AG04450 (cell line): ENCODE measurements at regions of chr17 and their contacts with region 1.

Region 1: DNA sequence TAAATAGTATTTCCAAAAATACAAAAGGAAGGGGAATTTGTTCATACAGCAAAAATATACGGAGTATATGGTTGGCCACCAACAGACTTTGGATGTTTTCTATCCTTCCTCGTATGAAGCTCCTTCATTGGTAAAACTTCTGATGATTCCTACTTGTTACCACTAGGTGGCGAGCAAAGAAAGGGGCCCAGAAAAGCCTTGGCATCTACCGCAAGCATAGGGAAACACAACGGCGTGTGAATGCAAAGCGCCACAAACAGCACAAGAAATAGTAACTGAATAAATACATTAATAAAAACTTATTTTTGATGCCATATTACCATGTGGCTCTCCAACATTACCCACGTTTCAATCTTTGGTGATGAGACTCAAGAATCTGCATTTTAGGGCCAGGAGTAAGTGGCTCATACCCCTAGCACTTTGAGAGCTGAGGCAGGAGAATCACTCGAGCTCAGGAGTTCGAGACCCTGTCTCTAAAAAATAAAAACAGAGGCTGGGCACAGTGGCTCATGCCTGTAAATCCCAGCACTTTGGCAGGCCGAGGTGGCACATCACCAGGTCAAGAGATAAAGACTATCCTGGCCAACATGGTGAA is 34.5 kb downstream of the YWHAE start:
- DNase-seq: peak; percentile 72
- H3K4me3 ChIP-seq: no peak overlapping the region
- H3K27ac ChIP-seq: peak overlapping the region; percentile 47
- H3K27me3 ChIP-seq: no peaks in the 10 kb centered on the region
- CTCF ChIP-seq: peak; percentile 94

Region 2: DNA sequence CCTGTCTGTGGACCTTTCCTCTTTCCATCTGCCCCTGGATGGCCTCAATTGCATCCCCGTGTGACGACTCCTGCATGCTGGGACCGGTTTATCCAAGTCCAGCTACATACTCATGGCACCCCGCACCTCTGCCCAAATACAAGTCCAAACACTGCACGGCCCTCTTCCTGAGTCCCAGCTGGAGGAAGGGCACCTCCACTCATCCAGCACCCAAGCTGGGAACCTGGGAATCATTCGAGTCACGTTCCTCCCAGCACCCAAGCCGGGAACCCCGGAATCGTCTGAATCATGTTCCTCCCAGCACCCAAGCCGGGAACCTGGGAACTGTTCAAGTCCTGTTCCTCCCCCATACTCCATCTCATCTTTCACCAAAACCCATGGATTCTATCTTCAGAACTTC is 75.8 kb before region 1 on chr17:
- CTCF ChIA-PET with region 1: no interaction called
- POLR2A ChIA-PET with region 1: no interaction called
- DNase-seq: no peak
- H3K4me3 ChIP-seq: no peak overlapping the region
- H3K27ac ChIP-seq: no peak overlapping the region
- H3K27me3 ChIP-seq: peaks cover under 1% of the 10 kb centered on the region
- CTCF ChIP-seq: no peak

Region 3: DNA sequence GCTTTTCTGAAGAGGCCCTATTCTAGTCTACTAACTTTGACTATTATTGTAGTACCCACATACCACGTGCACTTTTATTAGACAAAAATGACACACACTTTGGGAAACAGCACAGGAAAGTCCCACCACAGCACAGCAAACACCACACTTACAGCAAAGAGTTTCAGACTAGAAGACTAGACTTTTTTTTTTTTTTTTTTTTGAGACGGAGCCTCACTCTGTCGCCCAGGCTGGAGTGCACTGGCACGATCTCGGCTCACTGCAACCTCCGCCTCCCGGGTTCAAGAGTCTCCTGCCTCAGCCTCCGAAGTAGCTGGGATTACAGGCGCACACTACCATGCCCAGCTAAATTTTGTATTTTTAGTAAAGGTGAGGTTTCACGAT is 14.4 kb after region 1 on chr17:
- CTCF ChIA-PET with region 1: interaction called, 78 read pairs
- POLR2A ChIA-PET with region 1: interaction called, 7 read pairs
- DNase-seq: no peak
- H3K4me3 ChIP-seq: no peak overlapping the region
- H3K27ac ChIP-seq: no peak overlapping the region
- H3K27me3 ChIP-seq: no peaks in the 10 kb centered on the region
- CTCF ChIP-seq: no peak

Region 4: DNA sequence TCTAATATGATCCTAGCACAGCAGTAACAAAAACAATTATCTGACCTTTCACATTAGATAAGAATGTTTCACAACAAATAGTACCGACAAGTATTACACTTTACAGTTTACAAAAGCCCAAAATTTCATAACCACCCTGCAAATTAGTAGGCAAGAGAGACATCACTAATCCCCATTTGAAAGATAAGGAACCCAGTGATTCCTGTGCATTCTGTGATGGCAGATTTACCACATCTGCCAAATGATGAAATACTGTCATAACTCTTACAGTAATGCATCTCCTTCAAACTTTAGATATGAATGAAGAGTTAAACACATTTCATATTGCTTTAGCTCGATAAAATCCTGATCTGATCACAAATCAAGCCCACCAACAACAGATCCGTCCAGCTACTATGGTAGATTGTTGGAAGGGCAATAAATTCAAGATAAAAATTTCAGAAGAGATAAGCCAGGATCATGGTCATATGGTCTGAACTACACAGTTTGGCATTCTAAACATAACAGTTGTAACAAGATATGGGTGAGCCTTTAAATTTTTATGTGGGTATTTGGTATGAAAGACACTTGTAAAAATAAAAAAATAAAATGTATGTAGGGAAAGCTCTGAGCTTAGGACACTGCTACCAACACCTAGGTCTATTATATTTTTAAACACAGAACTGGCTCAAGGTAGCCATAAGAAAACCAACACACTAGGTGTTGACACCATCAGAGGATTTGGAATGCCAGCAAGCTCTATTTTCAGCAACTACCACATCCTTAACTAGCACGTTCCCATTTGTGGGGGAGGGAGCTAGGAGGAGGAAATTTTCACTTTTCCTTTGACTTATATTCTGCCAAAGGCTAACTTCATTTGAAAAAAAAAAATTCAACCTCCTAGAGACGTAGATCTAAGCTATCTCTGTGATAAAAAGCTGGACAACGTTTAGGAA is 25.2 kb after region 1 on chr17:
- CTCF ChIA-PET with region 1: interaction called, 68 read pairs
- POLR2A ChIA-PET with region 1: interaction called, 4 read pairs
- DNase-seq: no peak
- H3K4me3 ChIP-seq: no peak overlapping the region
- H3K27ac ChIP-seq: no peak overlapping the region
- H3K27me3 ChIP-seq: no peaks in the 10 kb centered on the region
- CTCF ChIP-seq: no peak

Region 5: DNA sequence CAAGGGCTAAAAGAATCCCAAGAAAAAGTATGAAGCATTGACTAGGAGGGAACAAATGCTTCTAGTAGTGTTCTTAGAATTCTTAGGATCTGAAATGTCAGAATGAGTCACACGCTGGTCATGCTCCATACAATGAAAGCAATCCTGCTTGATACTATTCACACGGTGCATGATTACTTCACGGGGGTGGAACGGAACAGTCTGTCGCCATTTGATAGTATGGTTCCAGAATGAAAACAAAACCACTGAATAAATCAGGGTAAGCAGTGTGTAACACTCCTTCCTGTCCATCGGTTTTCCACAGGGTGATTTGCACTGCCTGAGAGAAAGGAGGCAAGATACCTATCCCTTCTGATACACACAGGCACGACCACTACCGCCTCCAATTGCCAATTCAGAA is 57.4 kb after region 1 on chr17:
- CTCF ChIA-PET with region 1: interaction called, 12 read pairs
- POLR2A ChIA-PET with region 1: no interaction called
- DNase-seq: peak; percentile 87
- H3K4me3 ChIP-seq: no peak overlapping the region
- H3K27ac ChIP-seq: peak overlapping the region; percentile 67
- H3K27me3 ChIP-seq: no peaks in the 10 kb centered on the region
- CTCF ChIP-seq: no peak

Region 6: GRCh38 chr17:1516388-1517161 is 151.0 kb after region 1 on chr17 and contains the start of gene INPP5K:
- CTCF ChIA-PET with region 1: interaction called, 47 read pairs
- POLR2A ChIA-PET with region 1: interaction called, 4 read pairs
- DNase-seq: peak; percentile 96
- H3K4me3 ChIP-seq: peak within 1 kb of the TSS; percentile 98
- H3K27ac ChIP-seq: peak within 1 kb of the TSS; percentile 90
- H3K27me3 ChIP-seq: no peaks in the 10 kb centered on the region
- CTCF ChIP-seq: no peak
- polyA plus RNA-seq, gene INPP5K: 23.8 and 25.9 TPM in 2 replicates